Activated CD4-positive, alpha-beta memory T cell treated with anti-CD3 and anti-CD28 coated beads, Interleukin-2, amount 10 ng/mL, durations not matched to agents 7 days and 5 days (primary cell): ENCODE measurements at regions of chr7 and their contacts with region 1.

Region 1: DNA sequence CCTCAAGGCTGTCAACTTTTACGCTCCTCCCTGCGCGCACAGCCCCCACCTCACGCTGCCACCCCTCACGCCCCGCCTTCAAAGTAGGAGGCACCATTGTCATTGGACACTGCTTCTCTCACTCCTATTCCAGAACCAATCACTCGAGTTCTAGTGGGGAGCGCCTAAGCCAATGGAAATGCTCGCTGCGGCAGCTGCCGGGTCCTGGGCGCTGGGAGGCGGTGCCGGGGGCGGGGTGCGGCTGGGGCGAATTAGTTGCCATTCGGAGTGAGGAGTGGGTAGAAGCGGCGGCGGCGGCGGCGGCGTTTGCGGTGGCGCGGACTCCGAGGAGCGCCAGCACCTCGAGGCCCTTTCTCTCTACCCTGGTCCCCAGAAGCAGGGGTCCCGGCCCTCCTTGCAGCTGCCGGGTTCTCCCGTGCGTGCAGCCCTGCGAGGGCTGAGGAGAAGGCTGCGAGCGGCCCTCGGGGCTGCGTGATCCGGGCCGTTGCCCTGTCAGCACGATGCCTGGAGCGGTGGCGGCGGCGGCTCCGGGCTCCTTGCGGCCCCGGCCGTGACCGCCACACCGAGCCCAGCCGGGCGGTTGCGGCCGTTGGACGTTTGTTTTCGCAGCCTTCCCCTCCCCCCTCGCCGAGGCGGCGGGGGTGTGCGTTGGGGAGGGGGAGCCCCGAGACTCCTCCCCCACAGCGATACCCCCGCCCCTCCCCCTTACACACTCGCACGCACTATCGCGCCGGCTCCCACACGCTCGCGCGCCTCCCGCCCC is at the start of gene GLCCI1:
- DNase-seq: peak; percentile 96
- H3K4me3 Mint-ChIP-seq: peak within 1 kb of the TSS; percentile 84
- H3K27ac Mint-ChIP-seq: peak within 1 kb of the TSS; percentile 86
- H3K4me1 Mint-ChIP-seq: peaks cover 13% of the 10 kb centered on the region
- H3K27me3 Mint-ChIP-seq: no peaks in the 10 kb centered on the region
- total RNA-seq, gene GLCCI1: 25.4 to 29.0 TPM

Region 2: GRCh38 chr7:7681179-7681935 is 287.4 kb before region 1 on chr7:
- CTCF ChIA-PET with region 1: interaction called, 13 read pairs
- POLR2A ChIA-PET with region 1: interaction called, 3 read pairs
- DNase-seq: peak; percentile 26
- H3K4me3 Mint-ChIP-seq: no peak overlapping the region
- H3K27ac Mint-ChIP-seq: no peak overlapping the region
- H3K4me1 Mint-ChIP-seq: peaks cover 21% of the 10 kb centered on the region
- H3K27me3 Mint-ChIP-seq: no peaks in the 10 kb centered on the region

Region 3: GRCh38 chr7:7920481-7920880 is 48.2 kb before region 1 on chr7:
- CTCF ChIA-PET with region 1: no interaction called
- POLR2A ChIA-PET with region 1: interaction called, 24 read pairs
- DNase-seq: peak; percentile 21
- H3K4me3 Mint-ChIP-seq: peak overlapping the region; percentile 21
- H3K27ac Mint-ChIP-seq: no peak overlapping the region
- H3K4me1 Mint-ChIP-seq: peaks cover 27% of the 10 kb centered on the region
- H3K27me3 Mint-ChIP-seq: no peaks in the 10 kb centered on the region

Region 4: GRCh38 chr7:7957513-7957912 is 11.2 kb before region 1 on chr7:
- CTCF ChIA-PET with region 1: interaction called, 3 read pairs
- POLR2A ChIA-PET with region 1: interaction called, 11 read pairs
- DNase-seq: no peak
- H3K4me3 Mint-ChIP-seq: no peak overlapping the region
- H3K27ac Mint-ChIP-seq: no peak overlapping the region
- H3K4me1 Mint-ChIP-seq: no peaks in the 10 kb centered on the region
- H3K27me3 Mint-ChIP-seq: no peaks in the 10 kb centered on the region

Region 5: DNA sequence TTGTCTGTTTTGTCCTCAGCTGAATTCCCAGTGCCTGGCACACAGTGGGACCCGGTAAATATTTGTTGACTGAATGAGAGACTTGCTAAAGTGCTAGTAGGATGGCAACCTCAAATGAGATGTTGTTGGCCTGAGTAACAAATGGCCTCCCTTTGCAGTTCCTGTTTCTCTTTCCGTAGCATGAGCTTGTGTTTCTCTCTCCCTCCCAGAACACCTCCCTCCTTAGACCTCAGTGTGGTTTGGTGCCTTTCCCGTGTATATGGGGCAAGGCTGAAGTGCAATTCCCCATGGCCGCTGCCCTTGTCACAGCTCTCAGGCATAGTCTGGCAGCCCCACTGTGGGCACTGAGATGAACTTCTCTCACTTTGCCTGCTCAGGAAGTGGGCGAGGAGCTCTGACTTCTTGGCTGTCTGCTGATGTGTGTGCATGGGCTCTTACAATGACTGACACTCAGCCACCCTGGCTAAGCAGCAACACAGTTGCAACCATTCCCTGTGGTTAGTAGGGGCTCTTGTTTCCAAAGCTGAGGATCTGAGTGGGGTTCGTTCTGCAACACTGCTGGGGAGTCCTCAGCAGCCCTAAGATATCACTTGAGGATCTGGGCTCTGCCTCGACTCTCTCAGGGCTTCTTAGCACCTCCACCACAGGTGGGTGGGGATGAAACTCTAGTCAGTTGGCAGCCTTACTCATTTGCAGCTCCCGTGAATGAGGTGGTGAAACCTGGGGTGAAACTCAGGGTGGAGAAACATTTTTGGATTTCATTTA is 157.1 kb after region 1 on chr7:
- CTCF ChIA-PET with region 1: interaction called, 7 read pairs
- POLR2A ChIA-PET with region 1: interaction called, 73 read pairs
- DNase-seq: peak; percentile 86
- H3K4me3 Mint-ChIP-seq: peak overlapping the region; percentile 65
- H3K27ac Mint-ChIP-seq: peak overlapping the region; percentile 100
- H3K4me1 Mint-ChIP-seq: peaks cover 65% of the 10 kb centered on the region
- H3K27me3 Mint-ChIP-seq: no peaks in the 10 kb centered on the region

Region 6: DNA sequence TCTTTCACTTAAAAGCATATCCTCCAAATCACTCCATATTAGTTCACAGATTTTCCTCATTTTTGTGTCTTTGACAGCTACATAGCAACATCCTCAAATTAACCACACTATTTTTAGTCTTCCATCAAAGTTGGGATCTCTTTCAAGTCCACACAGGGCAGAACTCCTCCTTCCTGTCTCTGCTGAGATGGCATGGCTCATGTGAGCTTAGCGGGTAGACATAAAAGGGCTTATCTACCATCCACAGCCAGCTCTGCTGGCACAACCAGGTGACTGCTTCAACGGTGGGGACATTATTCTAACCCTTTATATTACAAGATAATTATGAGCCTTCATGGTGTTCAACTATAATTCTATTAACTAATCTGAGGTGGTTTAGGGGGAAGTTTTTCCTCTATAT is 257.8 kb after region 1 on chr7:
- CTCF ChIA-PET with region 1: no interaction called
- POLR2A ChIA-PET with region 1: no interaction called
- DNase-seq: no peak
- H3K4me3 Mint-ChIP-seq: no peak overlapping the region
- H3K27ac Mint-ChIP-seq: no peak overlapping the region
- H3K4me1 Mint-ChIP-seq: no peaks in the 10 kb centered on the region
- H3K27me3 Mint-ChIP-seq: peaks cover 26% of the 10 kb centered on the region